ENCODE measurements at regions of chr1 and their contacts with region 1.

Region 1: DNA sequence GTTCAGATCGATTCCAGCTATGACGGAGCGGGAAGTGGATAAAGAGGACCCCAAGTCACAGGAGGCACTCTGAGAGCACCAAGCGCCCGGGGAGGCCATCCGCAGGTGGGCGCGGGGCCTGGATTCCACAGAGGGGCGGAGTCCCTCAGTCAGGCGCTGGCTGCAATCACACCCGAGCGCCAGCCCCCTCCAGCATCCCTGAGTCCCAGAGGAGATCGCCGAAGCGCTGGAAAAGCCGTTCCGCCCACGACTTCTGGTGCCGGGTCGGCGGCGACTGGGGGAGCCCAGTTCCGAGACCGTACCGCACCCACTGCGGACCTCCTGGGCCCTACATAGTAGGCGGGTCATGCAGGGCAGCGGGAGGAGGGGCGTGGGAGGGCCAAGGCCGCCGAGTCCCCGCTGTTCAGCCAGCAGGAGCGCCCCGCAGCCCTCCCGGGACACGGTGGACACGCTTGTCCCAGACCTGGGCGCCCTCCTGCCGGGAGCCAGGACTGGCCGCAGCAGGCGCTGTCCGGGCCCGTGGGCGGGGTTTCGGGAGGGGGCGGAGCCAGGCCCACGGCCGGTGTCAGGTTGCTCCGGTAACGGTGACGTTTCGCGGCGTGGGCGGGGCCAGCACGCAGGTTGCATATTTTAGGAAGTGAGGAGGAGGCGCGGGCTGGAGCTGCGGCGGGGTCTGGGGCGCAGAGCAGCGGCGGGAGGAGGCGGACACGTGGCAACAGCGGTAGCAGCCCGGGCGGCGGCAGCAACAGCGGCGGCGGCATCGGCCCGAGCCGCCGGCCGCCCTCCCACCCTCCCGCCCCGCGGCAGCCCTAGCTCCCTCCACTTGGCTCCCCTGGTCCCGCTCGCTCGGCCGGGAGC is at the start of gene ATP1A1:
- DNase-seq: peak; percentile 94 to 98
- H3K4me3 ChIP-seq: peak within 1 kb of the TSS; percentile 78 to 81
- H3K27ac ChIP-seq: peak within 1 kb of the TSS; percentile 95 to 96
- H3K4me1 ChIP-seq: peaks cover 17 to 36% of the 10 kb centered on the region in 2 donors
- H3K27me3 ChIP-seq: no peaks in the 10 kb centered on the region
- CTCF ChIP-seq: no peak
- total RNA-seq, gene ATP1A1: 255 TPM

Region 2: GRCh38 chr1:115068826-115069572 is 1303.8 kb before region 1 on chr1:
- intact Hi-C with region 1: loop called (anchors 10 kb)
- DNase-seq: peak; percentile 46 to 83
- H3K4me3 ChIP-seq: no peak overlapping the region
- H3K27ac ChIP-seq: peak overlapping the region; percentile 84 to 86
- H3K4me1 ChIP-seq: peaks cover 12 to 50% of the 10 kb centered on the region in 2 donors
- H3K27me3 ChIP-seq: no peaks in the 10 kb centered on the region
- CTCF ChIP-seq: peak in 1 of 3 experiments; percentile 23

Region 3: DNA sequence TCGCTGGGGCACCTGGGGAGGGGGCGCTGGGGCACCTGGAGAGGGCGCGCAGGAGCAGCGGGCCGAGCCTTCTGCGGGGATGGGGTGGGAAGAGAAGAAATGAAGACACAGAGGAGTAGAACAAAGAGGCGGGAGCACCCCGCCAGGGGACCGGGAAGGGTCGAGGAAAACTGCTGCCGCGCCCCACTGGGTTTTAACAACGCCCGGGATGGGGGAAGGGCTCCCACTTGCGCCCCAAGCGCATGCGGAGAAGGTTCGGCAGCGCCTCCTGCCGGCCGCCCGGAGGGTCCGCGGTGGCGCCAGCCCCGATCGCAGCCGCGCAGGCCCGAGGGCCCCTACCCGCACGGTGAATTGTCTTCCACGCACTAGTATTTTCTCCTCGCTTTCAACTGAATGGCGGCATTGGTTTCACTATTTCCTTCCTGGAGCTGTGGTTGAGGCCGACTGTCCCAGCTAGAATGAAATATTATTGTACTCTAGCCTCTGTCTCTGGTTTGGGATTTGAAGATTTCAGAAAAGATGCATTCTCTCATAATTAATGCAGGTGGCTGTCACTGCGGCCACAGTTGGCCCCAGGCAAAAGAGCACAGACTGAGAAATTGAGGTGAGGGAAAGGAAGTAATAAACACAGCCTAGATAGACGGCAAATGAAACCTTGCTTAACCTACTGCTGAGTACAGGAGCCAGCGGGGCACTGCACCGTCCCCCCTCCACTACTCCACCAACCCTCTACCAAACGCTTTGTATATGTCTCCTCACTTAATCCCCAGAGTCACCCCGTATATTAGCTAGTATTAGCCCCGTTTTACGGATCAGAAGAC is 204.3 kb before region 1 on chr1:
- intact Hi-C with region 1: loop called (anchors 5 kb)
- DNase-seq: peak in 1 of 2 donors; percentile 87
- H3K4me3 ChIP-seq: peak overlapping the region; percentile 73 to 75
- H3K27ac ChIP-seq: peak overlapping the region; percentile 62 to 65
- H3K4me1 ChIP-seq: peaks cover 16 to 22% of the 10 kb centered on the region in 2 donors
- H3K27me3 ChIP-seq: no peaks in the 10 kb centered on the region
- CTCF ChIP-seq: peak; percentile 88 to 94 (median 94)

Region 4: GRCh38 chr1:116243333-116244054 is 129.3 kb before region 1 on chr1:
- intact Hi-C with region 1: no loop called
- DNase-seq: no peak
- H3K4me3 ChIP-seq: no peak overlapping the region
- H3K27ac ChIP-seq: no peak overlapping the region
- H3K4me1 ChIP-seq: no peaks in the 10 kb centered on the region
- H3K27me3 ChIP-seq: no peaks in the 10 kb centered on the region
- CTCF ChIP-seq: no peak

Region 5: DNA sequence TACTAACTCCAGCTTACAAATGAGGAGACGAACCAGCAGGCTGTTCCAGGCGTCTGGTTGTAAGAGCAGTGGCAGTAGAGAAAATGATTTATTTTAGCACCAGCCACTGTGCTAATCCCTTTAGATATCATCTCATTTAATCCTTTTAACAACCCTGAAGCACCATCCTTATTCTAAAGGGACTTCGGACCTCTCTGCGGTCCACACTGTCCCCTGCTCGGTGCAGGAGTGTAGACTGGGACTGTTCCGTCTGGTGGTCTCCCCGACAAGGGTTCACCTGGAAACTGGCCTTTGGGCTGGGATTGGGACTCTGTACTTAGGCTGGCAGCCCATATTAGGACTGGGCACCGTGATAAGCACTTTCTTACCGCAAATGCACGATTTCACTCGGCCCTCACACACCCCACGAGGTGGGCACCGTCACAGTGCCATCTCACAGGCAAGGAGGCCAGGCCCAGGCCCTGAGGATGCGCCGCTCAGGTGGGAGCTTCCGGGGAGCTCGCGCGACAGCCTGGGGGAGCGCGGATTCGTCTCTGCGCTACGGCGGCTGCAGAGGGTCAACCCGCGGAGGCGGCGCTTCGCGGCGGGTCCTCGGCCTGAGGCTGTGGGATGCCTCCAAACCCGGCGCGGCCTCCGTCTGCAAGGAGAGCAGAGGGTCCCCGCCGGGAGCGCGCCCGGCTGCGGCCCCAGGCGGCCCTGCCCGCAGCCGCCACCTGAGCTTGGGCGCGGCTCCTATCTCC is 45.4 kb after region 1 on chr1:
- intact Hi-C with region 1: loop called (anchors 2 kb)
- DNase-seq: peak; percentile 19 to 85
- H3K4me3 ChIP-seq: peak overlapping the region; percentile 76 to 98
- H3K27ac ChIP-seq: peak overlapping the region; percentile 63 to 71
- H3K4me1 ChIP-seq: peaks cover 0 to 8% of the 10 kb centered on the region in 2 donors
- H3K27me3 ChIP-seq: no peaks in the 10 kb centered on the region
- CTCF ChIP-seq: no peak

Region 6: DNA sequence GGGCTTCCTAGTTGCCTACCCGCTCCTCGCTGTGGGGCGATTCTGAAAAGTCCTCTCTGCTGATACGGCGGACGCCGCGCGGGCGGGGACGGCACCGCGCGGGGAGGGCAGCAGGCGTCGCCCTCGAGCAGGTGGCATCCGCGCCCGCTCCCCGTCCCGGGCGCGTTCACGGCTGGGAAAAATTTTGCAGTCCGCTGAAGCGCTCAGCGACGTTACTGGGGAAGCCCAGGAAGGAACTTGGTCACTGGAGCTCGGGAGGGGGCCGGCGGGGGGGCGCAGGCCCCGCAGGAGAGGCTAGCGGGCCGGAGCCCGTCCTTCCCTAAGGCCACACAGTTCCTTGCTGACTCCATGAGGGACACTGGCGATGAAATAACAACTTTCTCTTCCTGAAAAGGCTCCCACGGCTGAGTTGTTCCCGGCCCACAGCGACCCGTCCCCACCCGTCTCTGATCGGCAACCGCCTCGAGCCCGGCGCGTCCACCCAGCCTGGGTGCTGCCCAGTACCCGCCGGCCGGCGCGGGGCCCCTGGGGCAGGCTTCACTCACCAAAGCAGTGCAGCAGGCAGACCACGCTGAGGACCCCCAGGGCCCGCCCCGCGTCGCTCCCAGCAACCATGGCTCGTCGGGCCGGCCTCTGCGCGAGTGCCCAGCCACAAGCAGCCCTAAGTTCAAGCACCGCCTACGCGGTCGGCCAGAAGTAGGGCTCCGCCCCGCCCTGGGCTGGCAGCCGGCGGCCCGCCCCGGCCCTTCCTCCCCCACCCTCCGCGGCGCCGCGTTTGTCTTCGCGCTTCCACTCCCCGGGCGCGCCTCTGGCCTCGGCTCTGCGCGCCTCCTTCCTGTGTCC is 197.8 kb after region 1 on chr1 and contains the start of gene CD58:
- intact Hi-C with region 1: loop called (anchors 2 kb)
- DNase-seq: peak; percentile 55 to 95
- H3K4me3 ChIP-seq: peak within 1 kb of the TSS; percentile 91 to 92
- H3K27ac ChIP-seq: peak within 1 kb of the TSS; percentile 99 to 100
- H3K4me1 ChIP-seq: peaks cover 0 to 11% of the 10 kb centered on the region in 2 donors
- H3K27me3 ChIP-seq: no peaks in the 10 kb centered on the region
- CTCF ChIP-seq: peak; percentile 73 to 81 (median 78)
- total RNA-seq, gene CD58: 50.7 TPM